OCI-LY7 (cell line): ENCODE measurements at regions of chr2 and their contacts with region 1.

Region 1: DNA sequence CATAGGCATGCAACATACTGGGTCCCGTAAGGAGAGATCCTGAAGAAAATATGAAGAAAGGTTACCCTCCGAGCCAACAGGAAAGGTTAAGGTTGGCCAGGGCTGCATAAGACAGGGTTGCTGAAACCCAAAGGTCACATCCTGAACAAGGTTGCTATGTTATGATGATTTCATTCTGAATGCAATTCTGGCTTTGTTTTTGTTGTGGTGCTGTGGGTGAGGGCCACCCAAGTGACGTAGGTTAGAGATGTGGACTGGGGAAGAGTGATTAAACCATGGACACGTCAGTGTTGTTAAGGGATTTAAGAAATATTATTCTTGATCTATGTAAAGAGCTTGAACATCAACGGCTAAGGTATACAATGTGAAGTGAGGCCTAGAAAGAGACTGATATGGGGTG is 60.0 kb downstream of the ZEB2 start:
- DNase-seq: no peak
- H3K4me3 ChIP-seq: no peak overlapping the region
- H3K27ac ChIP-seq: no peak overlapping the region
- H3K4me1 ChIP-seq: peaks cover 26% of the 10 kb centered on the region
- CTCF ChIP-seq: no peak

Region 2: DNA sequence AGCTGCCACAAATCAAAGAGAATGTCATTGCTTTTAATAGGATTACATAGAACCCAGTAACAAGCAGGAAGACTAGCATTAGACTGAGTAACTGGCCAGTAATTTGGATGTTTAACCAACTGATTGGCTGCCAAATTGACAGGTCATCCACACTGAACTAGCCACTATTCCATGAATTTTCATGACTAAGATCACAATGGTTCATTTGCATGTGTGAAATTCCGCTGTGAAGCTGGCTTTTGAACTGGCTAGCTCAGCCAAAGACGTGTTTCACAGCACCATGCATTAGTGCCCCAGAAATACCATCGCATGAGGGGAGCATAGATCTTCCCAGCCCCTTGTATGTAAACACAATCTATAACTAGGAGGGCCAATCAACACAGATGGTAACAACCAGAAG is 680.9 kb before region 1 on chr2:
- CTCF ChIA-PET with region 1: no interaction called
- POLR2A ChIA-PET with region 1: no interaction called
- intact Hi-C with region 1: no loop called
- DNase-seq: no peak
- H3K4me3 ChIP-seq: no peak overlapping the region
- H3K27ac ChIP-seq: no peak overlapping the region
- H3K4me1 ChIP-seq: no peaks in the 10 kb centered on the region
- CTCF ChIP-seq: no peak

Region 3: DNA sequence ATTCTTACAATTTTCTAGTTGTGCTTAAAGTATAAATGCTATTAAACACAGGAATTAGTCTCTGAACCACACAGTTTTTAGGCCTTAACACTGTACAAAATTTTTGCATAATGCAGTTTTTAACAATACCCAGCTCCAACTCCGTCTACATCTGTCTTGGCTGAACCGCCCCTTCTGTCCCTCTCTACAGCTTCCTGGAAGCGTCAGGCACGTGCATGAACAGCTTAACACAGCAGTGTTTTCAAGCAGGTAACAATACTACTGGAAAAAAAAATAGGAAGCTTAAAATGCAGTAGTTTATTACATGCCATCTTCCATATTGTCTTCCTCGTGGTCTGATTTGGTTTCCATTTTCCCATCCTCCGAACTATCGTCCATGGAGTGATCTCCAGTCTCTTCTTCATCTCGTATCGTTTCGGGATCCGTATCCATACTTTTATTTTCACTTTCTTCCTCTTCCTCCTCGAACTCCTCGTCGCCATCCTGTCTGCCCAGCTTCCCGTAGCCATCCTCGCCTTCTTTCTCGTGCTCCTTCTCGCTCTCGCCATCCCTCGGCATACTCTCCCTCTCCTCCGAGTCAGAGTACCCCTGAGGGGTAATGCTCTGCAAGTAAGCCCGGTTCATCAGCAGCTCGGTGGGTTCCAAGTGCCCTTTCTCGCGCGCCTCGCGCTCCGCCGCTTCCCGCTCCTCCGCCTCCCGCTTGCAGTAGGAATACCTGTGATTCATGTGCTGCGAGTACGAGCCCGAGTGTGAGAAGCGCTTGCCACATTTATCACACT is 70.6 kb before region 1 on chr2:
- CTCF ChIA-PET with region 1: no interaction called
- POLR2A ChIA-PET with region 1: no interaction called
- intact Hi-C with region 1: no loop called
- DNase-seq: no peak
- H3K4me3 ChIP-seq: no peak overlapping the region
- H3K27ac ChIP-seq: no peak overlapping the region
- H3K4me1 ChIP-seq: no peaks in the 10 kb centered on the region
- CTCF ChIP-seq: no peak

Region 4: GRCh38 chr2:144449028-144449406 is 10.9 kb before region 1 on chr2:
- CTCF ChIA-PET with region 1: no interaction called
- POLR2A ChIA-PET with region 1: interaction called, 10 read pairs
- intact Hi-C with region 1: no loop called
- DNase-seq: peak; percentile 12
- H3K4me3 ChIP-seq: peak overlapping the region; percentile 20
- H3K27ac ChIP-seq: no peak overlapping the region
- H3K4me1 ChIP-seq: peaks cover 17% of the 10 kb centered on the region
- CTCF ChIP-seq: peak; percentile 73

Region 5: GRCh38 chr2:144470334-144470733 is 10.4 kb after region 1 on chr2:
- CTCF ChIA-PET with region 1: no interaction called
- POLR2A ChIA-PET with region 1: interaction called, 12 read pairs
- intact Hi-C with region 1: no loop called
- DNase-seq: no peak
- H3K4me3 ChIP-seq: no peak overlapping the region
- H3K27ac ChIP-seq: no peak overlapping the region
- H3K4me1 ChIP-seq: peaks cover 11% of the 10 kb centered on the region
- CTCF ChIP-seq: no peak